Testis (tissue), 5 donors: ENCODE measurements at regions of chr6 and their contacts with region 1.

Region 1: DNA sequence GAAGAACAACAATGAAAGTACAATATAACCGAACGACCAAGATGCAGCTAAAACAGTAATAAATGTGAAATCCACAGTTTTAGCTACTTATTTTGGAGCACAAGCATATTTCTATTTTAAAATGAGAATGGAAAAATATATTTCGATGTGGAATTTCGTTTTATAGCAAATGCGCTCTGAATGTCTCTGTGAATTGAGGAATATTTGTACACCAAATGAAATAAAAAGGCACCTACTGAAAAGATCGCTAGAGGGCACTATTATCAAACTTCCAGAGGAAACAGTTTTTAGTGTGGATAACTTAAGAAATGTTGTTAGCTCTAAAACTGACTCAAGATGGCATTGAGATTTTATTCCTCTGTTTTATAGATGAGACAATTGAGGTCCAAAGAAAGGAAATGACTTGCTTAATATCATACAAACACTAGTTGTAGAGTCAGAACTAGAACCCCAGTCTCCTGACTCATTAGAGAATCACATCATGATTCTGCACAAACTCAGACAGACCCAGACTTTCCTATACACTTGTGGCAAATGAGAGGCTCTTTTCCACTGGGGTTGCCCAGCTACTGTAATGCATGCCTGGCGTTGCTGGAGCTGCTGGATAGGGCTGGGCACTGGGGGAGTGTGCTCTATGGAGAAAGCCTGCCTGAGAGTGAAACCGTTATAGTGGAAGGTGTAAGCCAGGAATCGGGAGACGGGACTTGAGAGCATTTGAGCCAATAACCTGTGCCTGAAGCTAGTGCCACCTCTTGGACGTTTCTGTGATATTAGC is 51.9 kb downstream of the GCLC start:
- DNase-seq: no peak
- H3K4me3 ChIP-seq: no peak overlapping the region
- H3K27ac ChIP-seq: no peak overlapping the region
- H3K4me1 ChIP-seq: no peaks in the 10 kb centered on the region
- H3K27me3 ChIP-seq: no peaks in the 10 kb centered on the region
- CTCF ChIP-seq: peak; percentile 32 to 76 (median 59)
- POLR2A ChIP-seq: no peak

Region 2: DNA sequence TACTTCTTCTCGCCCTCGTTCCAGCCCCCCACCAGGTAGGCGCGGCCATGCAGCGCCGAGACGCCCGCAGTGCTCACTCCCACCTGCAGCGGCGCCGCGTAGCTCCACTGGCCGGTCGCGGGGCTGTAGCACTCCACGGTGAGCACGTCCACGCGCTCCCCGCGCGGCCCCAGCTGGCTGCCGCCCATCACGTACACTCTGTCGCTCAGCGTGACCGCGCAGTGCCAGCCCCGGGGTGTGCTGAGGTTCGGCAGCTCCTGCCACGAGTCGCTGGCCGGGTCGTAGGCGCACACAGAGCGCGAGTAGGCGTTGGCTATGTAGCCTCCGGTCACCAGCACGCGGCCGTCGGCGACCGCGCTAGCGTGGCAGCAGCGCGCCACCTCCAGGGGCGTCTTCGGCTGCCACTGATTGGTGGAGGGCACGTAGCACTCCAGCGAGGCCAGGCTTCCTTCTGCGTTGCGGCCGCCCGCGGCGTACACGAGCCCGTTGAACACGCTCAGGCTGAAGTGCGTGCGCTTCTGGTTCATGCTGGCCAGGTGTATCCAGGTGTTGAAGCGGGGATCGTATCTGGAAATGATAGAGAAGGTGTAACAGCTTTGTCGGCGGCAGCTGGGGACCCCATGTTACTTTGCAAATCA is 158.8 kb after region 1 on chr6:
- intact Hi-C with region 1: loop called (anchors 10 kb)
- DNase-seq: peak; percentile 84
- H3K4me3 ChIP-seq: peak overlapping the region; percentile 55 to 72
- H3K27ac ChIP-seq: peak overlapping the region; percentile 31 to 68
- H3K4me1 ChIP-seq: no peaks in the 10 kb centered on the region
- H3K27me3 ChIP-seq: no peaks in the 10 kb centered on the region
- CTCF ChIP-seq: peak in 1 of 3 experiments; percentile 27
- POLR2A ChIP-seq: no peak

Region 3: GRCh38 chr6:53725791-53726431 is 232.9 kb after region 1 on chr6:
- intact Hi-C with region 1: loop called (anchors 5 kb)
- DNase-seq: peak; percentile 86
- H3K4me3 ChIP-seq: no peak overlapping the region
- H3K27ac ChIP-seq: no peak overlapping the region
- H3K4me1 ChIP-seq: peaks cover 2% of the 10 kb centered on the region
- H3K27me3 ChIP-seq: no peaks in the 10 kb centered on the region
- CTCF ChIP-seq: peak; percentile 67 to 94 (median 87)
- POLR2A ChIP-seq: no peak